Ovary (tissue), 10 donors: ENCODE measurements at regions of chr10 and their contacts with region 1.

Region 1: DNA sequence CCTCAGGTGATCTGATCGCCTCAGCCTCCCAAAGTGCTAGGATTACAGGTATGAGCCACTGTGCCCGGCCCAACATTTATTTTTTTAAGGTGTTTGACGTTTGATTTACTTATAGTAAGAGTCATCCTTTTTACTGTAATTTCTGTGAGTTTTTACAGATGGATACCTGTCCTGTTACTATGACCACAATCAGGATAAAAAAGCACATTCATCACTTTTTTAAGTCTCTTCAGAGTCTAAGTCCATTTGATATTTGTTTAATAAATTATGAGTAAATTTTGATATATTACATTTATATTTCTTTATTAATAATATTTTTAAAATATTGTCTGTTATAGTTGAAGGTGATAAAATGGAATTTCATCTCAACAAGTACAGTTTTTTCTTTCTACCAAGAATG is 300.5 kb upstream of the KAT6B start:
- DNase-seq: no peak
- H3K4me3 ChIP-seq: no peak overlapping the region
- H3K27ac ChIP-seq: no peak overlapping the region
- H3K4me1 ChIP-seq: no peaks in the 10 kb centered on the region
- H3K27me3 ChIP-seq: no peaks in the 10 kb centered on the region
- CTCF ChIP-seq: no peak
- EP300 ChIP-seq: no peak
- POLR2A ChIP-seq: no peak

Region 2: GRCh38 chr10:74558897-74559296 is 33.0 kb after region 1 on chr10:
- intact Hi-C with region 1: loop called in 1 of 4 experiments (anchors 2 kb)
- DNase-seq: no peak
- H3K4me3 ChIP-seq: no peak overlapping the region
- H3K27ac ChIP-seq: no peak overlapping the region
- H3K4me1 ChIP-seq: peaks cover 2% of the 10 kb centered on the region
- H3K27me3 ChIP-seq: no peaks in the 10 kb centered on the region
- CTCF ChIP-seq: no peak
- EP300 ChIP-seq: no peak
- POLR2A ChIP-seq: no peak

Region 3: GRCh38 chr10:74690393-74690792 is 164.5 kb after region 1 on chr10:
- intact Hi-C with region 1: no loop called
- DNase-seq: no peak
- H3K4me3 ChIP-seq: no peak overlapping the region
- H3K27ac ChIP-seq: no peak overlapping the region
- H3K4me1 ChIP-seq: no peaks in the 10 kb centered on the region
- H3K27me3 ChIP-seq: no peaks in the 10 kb centered on the region
- CTCF ChIP-seq: no peak
- EP300 ChIP-seq: no peak
- POLR2A ChIP-seq: no peak

Region 4: DNA sequence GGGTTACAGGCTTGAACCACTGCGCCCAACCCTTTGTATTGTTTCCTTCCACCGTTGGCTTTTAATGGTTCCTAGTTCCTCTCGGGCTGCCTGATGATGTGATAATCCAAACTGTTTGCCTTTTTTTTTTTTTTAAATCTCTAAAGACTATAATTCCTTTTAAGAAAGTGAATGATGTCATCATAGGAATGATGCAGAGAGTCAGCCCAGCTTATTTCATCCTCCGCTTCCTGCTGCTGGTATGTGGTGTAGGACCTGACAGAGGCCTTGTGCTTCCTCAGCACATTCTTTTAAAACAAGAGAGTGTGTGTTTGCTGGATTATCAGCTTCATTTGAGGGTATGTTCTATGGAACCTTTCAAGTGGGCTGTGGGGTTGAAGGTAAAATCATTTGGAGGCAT is 1147.0 kb after region 1 on chr10:
- intact Hi-C with region 1: no loop called
- DNase-seq: no peak
- H3K4me3 ChIP-seq: no peak overlapping the region
- H3K27ac ChIP-seq: no peak overlapping the region
- H3K4me1 ChIP-seq: no peaks in the 10 kb centered on the region
- H3K27me3 ChIP-seq: no peaks in the 10 kb centered on the region
- CTCF ChIP-seq: no peak
- EP300 ChIP-seq: no peak
- POLR2A ChIP-seq: no peak